ENCODE measurements at regions of chr9 and their contacts with region 1.

Region 1: GRCh38 chr9:137406876-137407589 is 15.9 kb downstream of the EXD3 start:
- DNase-seq: peak; percentile 79
- ATAC-seq: peak; percentile 93
- H3K4me3 Mint-ChIP-seq: no peak overlapping the region
- H3K27ac Mint-ChIP-seq: no peak overlapping the region
- H3K4me1 Mint-ChIP-seq: peaks cover 6% of the 10 kb centered on the region
- H3K27me3 Mint-ChIP-seq: peaks cover 2% of the 10 kb centered on the region
- CTCF ChIP-seq: peak; percentile 82

Region 2: GRCh38 chr9:137295238-137295811 is 111.7 kb before region 1 on chr9:
- CTCF ChIA-PET with region 1: no interaction called
- POLR2A ChIA-PET with region 1: no interaction called
- intact Hi-C with region 1: loop called (anchors 10 kb)
- DNase-seq: peak; percentile 59
- ATAC-seq: peak; percentile 91
- H3K4me3 Mint-ChIP-seq: peak overlapping the region; percentile 8
- H3K27ac Mint-ChIP-seq: no peak overlapping the region
- H3K4me1 Mint-ChIP-seq: peaks cover 3% of the 10 kb centered on the region
- H3K27me3 Mint-ChIP-seq: peaks cover 38% of the 10 kb centered on the region
- CTCF ChIP-seq: peak; percentile 46

Region 3: DNA sequence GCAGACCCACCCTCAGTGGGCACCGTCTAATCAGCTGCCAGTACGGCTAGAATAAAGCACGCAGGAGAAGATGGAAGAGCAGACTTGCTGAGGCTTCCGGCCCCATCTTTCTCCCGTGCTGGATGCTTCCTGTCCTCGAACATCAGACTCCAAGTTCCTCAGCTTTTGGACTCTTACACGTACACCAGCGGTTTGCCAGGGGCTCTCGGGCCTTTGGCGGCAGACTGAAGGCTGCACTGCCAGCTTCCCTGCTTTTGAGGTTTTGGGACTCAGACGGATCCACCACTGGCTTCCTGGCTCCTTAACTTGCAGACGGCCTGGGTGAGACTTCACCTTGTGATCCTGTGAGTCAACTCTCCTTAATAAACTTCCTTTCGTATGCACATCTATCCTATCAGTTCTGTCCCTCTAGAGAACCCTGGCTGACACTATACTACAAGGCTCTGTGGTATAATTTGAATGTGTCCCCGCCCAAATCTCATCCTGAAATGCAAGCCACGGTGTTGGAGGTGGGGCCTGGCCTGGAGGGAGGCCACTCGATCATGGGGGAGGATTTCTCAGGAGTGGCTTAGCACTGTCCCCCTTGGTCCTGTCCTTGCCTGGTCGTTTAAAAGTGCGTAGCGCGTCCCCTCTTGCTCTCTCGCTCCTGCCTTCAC is 73.9 kb before region 1 on chr9:
- CTCF ChIA-PET with region 1: no interaction called
- POLR2A ChIA-PET with region 1: no interaction called
- intact Hi-C with region 1: no loop called
- DNase-seq: no peak
- ATAC-seq: no peak
- H3K4me3 Mint-ChIP-seq: no peak overlapping the region
- H3K27ac Mint-ChIP-seq: no peak overlapping the region
- H3K4me1 Mint-ChIP-seq: no peaks in the 10 kb centered on the region
- H3K27me3 Mint-ChIP-seq: peaks cover under 1% of the 10 kb centered on the region
- CTCF ChIP-seq: no peak

Measured in activated CD8-positive, alpha-beta T cell treated with anti-CD3 and anti-CD28 coated beads for 36 hours (primary cell).